ENCODE measurements at regions of chr2 and their contacts with region 1.

Region 1: DNA sequence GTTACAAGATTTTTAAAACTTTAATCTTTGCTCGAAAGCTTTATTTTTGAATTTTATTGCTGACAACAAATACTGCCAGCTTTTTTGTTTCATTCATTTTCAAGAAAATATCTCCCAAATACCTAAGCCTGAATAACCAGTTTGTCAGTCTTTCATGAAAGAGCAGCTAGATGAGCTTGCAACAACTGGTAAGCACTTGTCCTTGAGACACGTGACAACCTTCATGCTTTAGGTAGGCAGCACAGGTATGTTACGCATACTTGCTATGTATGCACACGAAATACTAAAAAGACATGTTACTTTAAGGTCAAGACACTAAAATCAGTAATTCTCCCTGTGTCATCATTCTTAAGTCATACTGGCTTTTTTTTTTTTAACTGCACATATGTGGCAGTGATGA is 12.4 kb downstream of the CEBPZ start:
- DNase-seq: no peak
- ATAC-seq: no peak
- H3K4me3 ChIP-seq: no peak overlapping the region
- H3K27ac ChIP-seq: no peak overlapping the region
- H3K4me1 ChIP-seq: no peaks in the 10 kb centered on the region
- H3K27me3 ChIP-seq: no peaks in the 10 kb centered on the region
- CTCF ChIP-seq: no peak

Region 2: GRCh38 chr2:37173741-37174140 is 45.3 kb before region 1 on chr2:
- CTCF ChIA-PET with region 1: interaction called, 10 read pairs
- POLR2A ChIA-PET with region 1: no interaction called
- in situ Hi-C with region 1: no loop called
- intact Hi-C with region 1: no loop called
- DNase-seq: no peak
- ATAC-seq: no peak
- H3K4me3 ChIP-seq: no peak overlapping the region
- H3K27ac ChIP-seq: no peak overlapping the region
- H3K4me1 ChIP-seq: no peaks in the 10 kb centered on the region
- H3K27me3 ChIP-seq: no peaks in the 10 kb centered on the region
- CTCF ChIP-seq: no peak